MCF 10A (cell line): ENCODE measurements at regions of chr3 and their contacts with region 1.

Region 1: GRCh38 chr3:64213962-64214379 is 11.3 kb downstream of the PRICKLE2 start:
- DNase-seq: peak; percentile 91
- H3K4me3 Mint-ChIP-seq: peak overlapping the region; percentile 55
- H3K27ac Mint-ChIP-seq: peak overlapping the region; percentile 56
- H3K4me1 Mint-ChIP-seq: peaks cover 21% of the 10 kb centered on the region
- H3K27me3 Mint-ChIP-seq: no peaks in the 10 kb centered on the region
- CTCF ChIP-seq: no peak

Region 2: GRCh38 chr3:64016941-64017620 is 196.9 kb before region 1 on chr3:
- CTCF ChIA-PET with region 1: no interaction called
- POLR2A ChIA-PET with region 1: no interaction called
- intact Hi-C with region 1: no loop called
- DNase-seq: no peak
- H3K4me3 Mint-ChIP-seq: peak overlapping the region; percentile 22
- H3K27ac Mint-ChIP-seq: peak overlapping the region; percentile 81
- H3K4me1 Mint-ChIP-seq: peaks cover 22% of the 10 kb centered on the region
- H3K27me3 Mint-ChIP-seq: no peaks in the 10 kb centered on the region
- CTCF ChIP-seq: no peak

Region 3: GRCh38 chr3:64187065-64187959 is 26.7 kb before region 1 on chr3:
- CTCF ChIA-PET with region 1: interaction called, 5 read pairs
- POLR2A ChIA-PET with region 1: interaction called, 84 read pairs
- intact Hi-C with region 1: loop called (anchors 1 kb)
- DNase-seq: peak; percentile 93
- H3K4me3 Mint-ChIP-seq: peak overlapping the region; percentile 62
- H3K27ac Mint-ChIP-seq: peak overlapping the region; percentile 83
- H3K4me1 Mint-ChIP-seq: peaks cover 66% of the 10 kb centered on the region
- H3K27me3 Mint-ChIP-seq: no peaks in the 10 kb centered on the region
- CTCF ChIP-seq: no peak

Region 4: DNA sequence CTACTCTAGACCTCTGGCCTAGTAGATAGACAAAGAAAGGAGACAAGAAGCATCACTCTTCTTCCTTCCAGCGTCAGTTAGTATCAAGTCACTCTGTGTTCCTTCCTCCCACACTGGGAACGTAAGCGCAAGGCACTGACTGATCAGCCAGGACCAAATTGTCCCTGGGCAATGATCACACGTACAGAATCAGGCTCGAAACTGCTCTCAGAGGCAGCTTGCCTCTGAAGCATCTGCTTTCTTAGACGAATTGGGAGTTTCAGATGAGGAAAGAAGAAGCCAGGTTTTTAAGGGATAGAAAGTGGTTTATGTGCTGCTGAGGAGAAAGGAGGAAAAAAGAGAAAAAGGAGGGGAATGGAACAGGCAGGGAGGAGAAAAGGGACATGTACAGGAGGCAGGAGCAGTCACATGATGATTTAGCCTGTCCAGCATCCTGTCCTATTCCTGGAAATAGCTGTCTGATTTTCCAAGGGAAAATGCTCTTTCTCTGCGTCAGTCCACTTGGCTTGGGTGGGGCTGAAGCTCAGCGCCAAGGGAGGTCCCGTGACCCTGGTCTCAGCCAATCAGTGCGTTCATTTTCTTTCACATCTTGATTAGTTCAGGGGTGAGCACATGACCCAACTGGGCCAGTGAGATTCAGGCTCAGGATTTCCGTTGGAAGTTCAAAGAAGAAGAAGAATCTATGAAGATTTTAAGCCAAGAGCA is 113.3 kb after region 1 on chr3:
- CTCF ChIA-PET with region 1: no interaction called
- POLR2A ChIA-PET with region 1: no interaction called
- intact Hi-C with region 1: no loop called
- DNase-seq: no peak
- H3K4me3 Mint-ChIP-seq: no peak overlapping the region
- H3K27ac Mint-ChIP-seq: no peak overlapping the region
- H3K4me1 Mint-ChIP-seq: peaks cover 2% of the 10 kb centered on the region
- H3K27me3 Mint-ChIP-seq: no peaks in the 10 kb centered on the region
- CTCF ChIP-seq: no peak